ENCODE measurements at regions of chr19 and their contacts with region 1.

Region 1: DNA sequence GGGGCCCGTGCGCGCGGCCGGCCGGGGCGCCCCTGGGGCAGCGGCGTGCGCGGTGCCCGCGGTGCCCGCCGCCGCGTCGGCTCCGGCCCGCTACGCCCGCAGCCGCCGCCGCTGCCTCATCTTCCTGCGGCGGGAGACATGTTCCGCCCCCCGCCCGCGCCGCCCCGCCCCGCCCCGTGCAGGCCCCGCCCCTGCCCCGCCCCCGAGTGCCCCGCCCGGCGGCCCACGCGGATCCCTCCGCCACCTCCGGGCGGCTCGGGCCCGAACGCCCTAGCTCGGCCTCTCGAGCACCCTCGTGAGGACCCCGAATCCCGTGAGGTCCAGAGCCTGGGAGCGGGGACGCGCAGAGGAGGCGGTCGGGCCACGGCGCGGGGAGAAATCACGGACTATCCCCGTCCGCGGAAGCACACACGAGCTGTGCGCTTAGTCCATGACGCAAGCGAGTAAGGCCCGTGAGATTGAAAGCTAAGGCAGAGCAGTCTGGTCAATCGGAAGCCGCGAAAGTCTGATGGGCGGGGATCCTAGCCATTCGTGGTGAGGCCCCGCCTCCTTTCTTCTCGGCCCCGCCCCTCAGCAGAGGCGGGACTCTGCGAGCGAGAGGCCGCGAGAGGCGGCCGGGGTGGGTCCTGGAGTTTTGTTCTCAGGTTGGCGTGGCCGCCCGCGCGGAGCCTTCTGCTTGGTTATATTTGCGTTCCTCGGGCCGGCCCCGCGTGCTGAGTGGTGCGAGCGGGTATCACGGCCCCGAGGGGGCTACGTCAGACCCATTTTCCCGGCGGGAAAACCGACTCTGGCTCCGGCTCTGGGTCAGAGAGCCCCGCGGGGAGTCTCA is at the start of gene TCF3:
- DNase-seq: peak; percentile 97 to 99 (median 99)
- ATAC-seq: peak; percentile 90
- H3K4me3 ChIP-seq: peak within 1 kb of the TSS; percentile 63
- H3K4me3 Mint-ChIP-seq: peak within 1 kb of the TSS; percentile 97
- H3K27ac ChIP-seq: peak within 1 kb of the TSS; percentile 99
- H3K27ac Mint-ChIP-seq: peak within 1 kb of the TSS; percentile 98
- H3K4me1 ChIP-seq: peaks cover 26% of the 10 kb centered on the region
- H3K4me1 Mint-ChIP-seq: peaks cover 14% of the 10 kb centered on the region
- H3K27me3 ChIP-seq: no peaks in the 10 kb centered on the region
- H3K27me3 Mint-ChIP-seq: peaks cover 10% of the 10 kb centered on the region
- CTCF ChIP-seq: no peak
- total RNA-seq, gene TCF3: 51.2 to 52.2 TPM

Region 2: DNA sequence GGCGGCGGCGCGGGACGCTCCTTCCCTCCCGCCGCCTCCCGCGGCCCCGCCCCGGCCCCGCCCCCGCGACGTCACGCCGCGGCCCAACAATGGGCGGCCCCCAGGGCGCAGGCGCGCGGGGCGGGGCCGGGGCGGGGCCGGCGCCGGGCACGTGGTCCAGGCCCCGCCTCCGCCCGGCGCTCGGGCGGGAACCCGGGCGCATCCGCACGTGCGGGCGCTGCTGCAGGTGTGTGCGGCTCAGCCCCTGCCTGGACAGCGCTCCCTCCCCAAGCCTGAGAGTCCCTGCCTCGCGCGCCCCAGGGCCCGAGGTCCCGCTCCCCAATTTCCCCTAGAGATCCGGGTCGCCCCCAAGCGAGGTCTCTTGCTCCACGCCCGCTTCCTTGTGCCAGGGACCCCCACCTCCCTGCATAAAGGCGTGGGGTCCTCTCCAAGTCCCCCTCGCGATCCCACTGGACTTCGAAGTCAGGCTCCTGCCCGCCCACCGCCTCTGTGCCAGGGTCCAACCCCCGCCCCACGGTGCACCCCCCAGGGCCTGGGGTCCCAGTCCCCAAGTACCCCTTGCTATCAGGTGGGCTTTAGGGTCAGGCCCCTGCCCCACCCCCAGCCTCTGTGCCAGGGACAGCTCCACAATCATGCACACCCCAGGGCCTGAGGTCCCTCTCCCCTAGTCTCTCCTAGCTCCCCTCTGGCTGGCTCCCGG is 84.2 kb before region 1 on chr19 and contains the start of gene MEX3D:
- CTCF ChIA-PET with region 1: no interaction called
- POLR2A ChIA-PET with region 1: no interaction called
- intact Hi-C with region 1: loop called in 1 of 2 experiments (anchors 1 kb)
- DNase-seq: peak; percentile 68 to 96 (median 83)
- ATAC-seq: peak; percentile 89
- H3K4me3 ChIP-seq: peak within 1 kb of the TSS; percentile 32
- H3K4me3 Mint-ChIP-seq: peak within 1 kb of the TSS; percentile 45
- H3K27ac ChIP-seq: no peak within 1 kb of the TSS
- H3K27ac Mint-ChIP-seq: no peak within 1 kb of the TSS
- H3K4me1 ChIP-seq: peaks cover 13% of the 10 kb centered on the region
- H3K4me1 Mint-ChIP-seq: peaks cover 4% of the 10 kb centered on the region
- H3K27me3 ChIP-seq: no peaks in the 10 kb centered on the region
- H3K27me3 Mint-ChIP-seq: peaks cover 4% of the 10 kb centered on the region
- CTCF ChIP-seq: no peak
- total RNA-seq, gene MEX3D: 1.6 to 2.3 TPM